Activated T-helper 1 cell treated with anti-CD3 and anti-CD28 coated beads, Interleukin-12 subunit alpha, Interleukin-12 subunit beta, Interleukin-2, Interleukin-4 antibody, amounts not matched to agents 30 ng/mL and 10 ng/mL and 1 ng/mL, durations not matched to agents 14 hours and 24 hours and 36 hours (primary cell): ENCODE measurements at regions of chr2 and their contacts with region 1.

Region 1: GRCh38 chr2:174603280-174603679 is 5.7 kb upstream of the WIPF1 start:
- DNase-seq: no peak
- H3K4me3 Mint-ChIP-seq: no peak overlapping the region
- H3K27ac Mint-ChIP-seq: peak overlapping the region; percentile 85
- H3K4me1 Mint-ChIP-seq: peaks cover 90% of the 10 kb centered on the region
- H3K27me3 Mint-ChIP-seq: no peaks in the 10 kb centered on the region

Region 2: DNA sequence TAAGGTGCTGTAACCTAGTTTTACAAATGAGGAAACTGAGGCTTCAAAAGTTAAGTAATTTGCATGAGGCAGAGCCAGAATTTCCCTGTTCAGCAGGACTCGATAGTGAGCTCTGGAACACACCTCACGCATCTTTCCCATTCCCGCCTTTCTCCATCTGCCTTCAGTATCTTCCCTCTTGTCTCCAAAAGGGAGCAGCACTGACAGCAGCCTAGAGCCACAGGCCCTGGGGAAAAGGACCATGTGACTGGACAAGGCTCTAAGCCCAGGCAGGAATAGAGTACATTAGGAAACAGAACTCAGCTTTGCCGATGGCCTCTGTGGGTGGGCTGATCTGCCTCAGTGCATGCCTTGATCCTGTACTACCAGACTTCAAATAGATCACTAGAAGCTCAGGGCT is 138.0 kb before region 1 on chr2:
- intact Hi-C with region 1: loop called (anchors 1 kb)
- DNase-seq: no peak
- H3K4me3 Mint-ChIP-seq: no peak overlapping the region
- H3K27ac Mint-ChIP-seq: no peak overlapping the region
- H3K4me1 Mint-ChIP-seq: no peaks in the 10 kb centered on the region
- H3K27me3 Mint-ChIP-seq: no peaks in the 10 kb centered on the region

Region 3: GRCh38 chr2:174577967-174578589 is 25.2 kb before region 1 on chr2:
- intact Hi-C with region 1: loop called (anchors 1 kb)
- DNase-seq: no peak
- H3K4me3 Mint-ChIP-seq: no peak overlapping the region
- H3K27ac Mint-ChIP-seq: no peak overlapping the region
- H3K4me1 Mint-ChIP-seq: peaks cover 60% of the 10 kb centered on the region
- H3K27me3 Mint-ChIP-seq: no peaks in the 10 kb centered on the region

Region 4: DNA sequence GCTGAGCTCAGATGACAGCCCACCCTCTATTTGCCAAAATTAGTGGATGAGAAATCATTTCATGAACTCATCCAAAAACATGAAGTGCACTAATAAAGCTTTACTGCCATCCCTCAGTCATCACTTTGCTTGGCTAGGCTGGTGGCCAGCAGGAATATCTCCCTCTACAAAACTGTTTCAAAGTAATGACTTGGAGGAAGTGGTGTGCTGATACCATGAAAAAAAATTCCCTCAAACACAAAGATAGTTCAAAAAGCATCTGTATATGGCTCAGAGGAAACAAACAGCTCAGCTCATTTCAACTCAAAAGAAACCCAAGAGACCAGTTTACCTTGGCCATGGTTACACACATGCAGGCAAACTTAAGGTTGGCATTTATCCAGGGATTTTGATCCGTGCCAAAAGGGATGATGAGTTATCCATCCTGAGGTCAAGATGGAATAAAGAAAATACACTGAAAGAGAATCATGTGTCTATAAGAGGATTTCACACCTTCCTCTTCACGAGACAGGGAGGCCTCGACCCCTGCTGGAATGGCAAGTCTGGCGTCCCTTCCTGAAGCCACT is 12.7 kb after region 1 on chr2:
- intact Hi-C with region 1: loop called (anchors 1 kb)
- DNase-seq: no peak
- H3K4me3 Mint-ChIP-seq: peak overlapping the region; percentile 60
- H3K27ac Mint-ChIP-seq: peak overlapping the region; percentile 94
- H3K4me1 Mint-ChIP-seq: peaks cover 92% of the 10 kb centered on the region
- H3K27me3 Mint-ChIP-seq: no peaks in the 10 kb centered on the region

Region 5: DNA sequence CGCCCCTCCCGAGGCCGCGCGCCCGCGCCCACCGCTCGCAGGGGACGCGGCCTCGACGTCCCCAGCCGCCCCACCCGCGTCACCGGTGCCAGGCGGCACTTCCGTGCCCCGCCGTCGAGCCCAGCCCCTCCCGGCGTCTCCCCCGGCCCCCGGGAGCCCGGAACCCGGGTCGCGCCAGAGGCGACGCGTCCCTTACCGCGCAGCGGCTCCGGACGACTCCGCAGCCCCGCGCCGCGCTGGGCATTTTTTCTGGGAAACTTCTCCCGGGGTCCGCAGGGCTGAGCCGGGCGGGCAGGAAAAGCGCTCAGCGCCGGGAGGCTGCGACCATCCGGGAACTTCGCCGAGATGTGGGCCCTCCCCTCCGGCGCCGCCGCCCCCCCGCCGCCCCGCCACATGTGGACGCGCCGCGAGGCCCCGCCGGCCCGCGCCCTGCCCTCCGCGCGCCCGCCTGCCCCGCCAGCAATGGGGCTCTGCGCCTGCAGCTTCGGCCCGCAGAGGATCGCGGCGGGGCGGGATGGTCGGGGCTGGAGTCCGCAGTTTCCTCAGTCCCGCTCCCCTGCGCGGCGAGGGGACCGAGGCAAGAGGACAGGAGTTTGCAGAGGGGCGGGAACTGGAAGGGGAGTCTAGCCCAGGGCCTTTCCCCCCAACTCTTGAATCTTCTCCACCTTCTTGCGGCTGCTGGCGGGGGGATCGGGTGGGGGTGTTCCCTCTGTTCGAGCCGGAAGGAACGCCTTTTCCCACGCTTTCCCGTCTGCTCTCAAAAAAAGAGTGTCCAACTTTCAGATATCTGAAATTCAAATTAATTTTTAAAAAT is 79.5 kb after region 1 on chr2:
- intact Hi-C with region 1: loop called (anchors 1 kb)
- DNase-seq: peak; percentile 57
- H3K4me3 Mint-ChIP-seq: peak overlapping the region; percentile 96
- H3K27ac Mint-ChIP-seq: peak overlapping the region; percentile 95
- H3K4me1 Mint-ChIP-seq: peaks cover 74% of the 10 kb centered on the region
- H3K27me3 Mint-ChIP-seq: no peaks in the 10 kb centered on the region

Region 6: DNA sequence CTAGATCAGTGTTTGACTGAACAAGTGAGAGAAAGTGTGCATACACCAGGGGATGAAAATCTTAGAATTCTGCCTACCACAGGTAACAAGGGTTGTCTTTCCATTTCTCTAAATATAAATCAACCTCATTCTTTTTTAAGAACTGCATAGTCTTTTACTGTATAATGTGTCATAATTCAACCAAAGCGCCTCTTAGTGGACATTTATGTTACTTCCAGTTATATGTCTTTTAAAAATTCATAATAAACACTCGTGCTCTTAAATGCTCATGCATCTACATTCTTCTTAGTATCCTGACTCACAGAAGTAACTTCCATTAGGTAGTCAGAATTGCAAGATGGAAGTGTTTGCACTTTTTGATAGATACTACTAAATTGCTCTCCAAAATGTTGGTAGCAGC is 84.8 kb after region 1 on chr2:
- intact Hi-C with region 1: loop called (anchors 1 kb)
- DNase-seq: no peak
- H3K4me3 Mint-ChIP-seq: no peak overlapping the region
- H3K27ac Mint-ChIP-seq: no peak overlapping the region
- H3K4me1 Mint-ChIP-seq: peaks cover 47% of the 10 kb centered on the region
- H3K27me3 Mint-ChIP-seq: no peaks in the 10 kb centered on the region

Region 7: DNA sequence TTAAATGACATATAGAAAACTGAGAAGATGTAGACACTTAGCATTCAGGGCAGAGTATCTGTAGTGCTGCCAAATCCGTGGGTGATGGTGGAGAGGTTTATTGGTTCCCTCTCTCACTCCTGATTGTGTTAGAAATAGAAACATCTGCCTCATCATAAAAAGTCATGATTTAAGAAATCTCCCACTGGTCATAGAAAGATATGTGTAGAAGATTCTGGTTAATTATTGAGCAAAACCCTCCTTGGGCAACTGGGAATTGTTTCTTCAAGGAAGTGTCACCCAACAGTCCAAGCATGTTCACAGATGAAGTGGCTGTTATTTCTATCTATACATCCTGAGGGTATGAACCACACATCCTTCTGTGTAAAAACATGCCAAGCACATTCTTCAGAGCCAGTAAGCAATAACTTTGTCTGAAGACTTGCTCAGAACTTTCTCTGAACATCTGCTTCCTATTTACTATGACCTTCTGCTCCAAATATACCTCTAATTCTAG is 194.5 kb after region 1 on chr2:
- intact Hi-C with region 1: loop called (anchors 5 kb)
- DNase-seq: no peak
- H3K4me3 Mint-ChIP-seq: no peak overlapping the region
- H3K27ac Mint-ChIP-seq: no peak overlapping the region
- H3K4me1 Mint-ChIP-seq: peaks cover 24% of the 10 kb centered on the region
- H3K27me3 Mint-ChIP-seq: peaks cover 5% of the 10 kb centered on the region